Kidney (tissue), 22 donors: ENCODE measurements at regions of chr17 and their contacts with region 1.

Region 1: DNA sequence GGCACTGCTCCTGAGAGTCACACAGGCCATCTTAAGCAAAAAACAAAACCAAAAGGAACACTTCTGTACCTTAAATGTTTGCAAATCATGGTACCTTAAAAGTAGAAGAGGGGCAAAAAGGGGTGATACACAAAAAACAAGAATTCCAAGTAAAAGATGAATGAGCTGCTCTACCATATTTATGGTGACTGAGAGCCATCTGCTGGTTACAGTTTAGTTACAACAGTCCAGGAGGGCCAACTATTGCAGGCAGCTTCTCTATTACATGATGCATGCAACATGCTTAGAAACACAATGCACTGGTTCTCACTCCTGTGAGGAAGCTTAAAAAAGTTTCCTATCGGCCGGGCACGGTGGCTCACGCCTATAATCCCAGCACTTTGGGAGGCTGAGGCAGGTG is 53.5 kb downstream of the STX8 start:
- DNase-seq: peak in 3 of 5 donors; percentile 19 to 80 (median 65)
- H3K4me3 ChIP-seq: no peak overlapping the region
- H3K27ac ChIP-seq: no peak overlapping the region
- H3K4me1 ChIP-seq: no peaks in the 10 kb centered on the region
- H3K27me3 ChIP-seq: no peaks in the 10 kb centered on the region
- CTCF ChIP-seq: peak; percentile 51

Region 2: GRCh38 chr17:8986290-8986689 is 535.8 kb before region 1 on chr17:
- intact Hi-C with region 1: loop called (anchors 10 kb)
- DNase-seq: no peak
- H3K4me3 ChIP-seq: no peak overlapping the region
- H3K27ac ChIP-seq: no peak overlapping the region
- H3K4me1 ChIP-seq: no peaks in the 10 kb centered on the region
- H3K27me3 ChIP-seq: no peaks in the 10 kb centered on the region
- CTCF ChIP-seq: no peak